GM10248 (cell line): ENCODE measurements at regions of chr5 and their contacts with region 1.

Region 1: DNA sequence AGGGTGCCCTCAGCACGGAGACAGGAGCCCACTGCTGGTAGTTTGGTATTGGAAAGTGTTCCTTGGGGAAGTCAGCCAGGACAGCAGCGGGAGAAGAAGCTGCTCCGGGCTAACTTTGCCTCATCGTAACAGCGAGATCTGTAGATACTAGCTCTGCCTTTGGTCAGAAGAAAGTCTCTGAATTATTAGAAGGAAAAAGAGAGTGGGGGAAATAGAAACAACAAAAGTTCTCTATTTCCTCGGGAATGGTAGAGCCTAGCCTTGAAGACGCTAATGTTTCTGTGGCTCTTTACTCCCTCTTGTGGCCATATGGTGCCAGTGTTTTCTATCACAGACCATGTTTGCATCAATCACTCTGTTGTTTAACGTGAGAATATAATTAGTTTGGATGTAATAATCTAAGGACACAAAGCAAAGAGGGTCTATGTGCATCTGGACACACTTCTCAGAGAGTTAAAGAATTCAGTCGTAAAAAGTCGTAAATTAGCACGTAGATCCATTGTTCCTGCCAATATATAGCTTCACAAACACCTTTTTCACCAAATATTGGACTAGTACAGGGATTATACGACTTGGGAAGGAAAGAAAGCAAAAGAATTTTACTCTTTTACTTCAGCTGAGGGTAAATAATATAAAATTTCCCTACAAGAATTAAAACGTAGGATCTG is 40.2 kb upstream of the HSD17B4 start:
- DNase-seq: peak; percentile 45
- CTCF ChIP-seq: peak; percentile 91

Region 2: DNA sequence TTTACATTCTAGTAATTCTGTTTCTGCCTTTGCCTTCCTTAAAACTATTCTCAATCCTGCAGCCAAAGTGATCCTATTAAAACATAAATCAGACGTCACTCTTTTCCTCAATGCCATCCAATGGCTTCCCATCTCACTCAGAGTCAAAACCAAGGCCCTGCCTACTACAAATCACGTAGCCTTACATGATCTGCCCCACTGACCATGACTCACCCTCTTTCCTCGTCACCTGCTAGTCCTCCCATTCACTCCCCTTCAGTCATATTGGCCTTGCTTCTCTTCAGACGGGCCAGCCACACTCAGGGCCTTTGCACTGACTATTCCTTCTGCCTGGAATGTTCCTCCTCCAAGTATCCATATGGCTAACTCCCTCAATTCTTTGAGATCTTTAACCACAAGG is 380.2 kb before region 1 on chr5:
- CTCF ChIA-PET with region 1: interaction called, 10 read pairs
- POLR2A ChIA-PET with region 1: no interaction called
- DNase-seq: peak; percentile 46
- CTCF ChIP-seq: no peak

Region 3: GRCh38 chr5:119315516-119315949 is 96.5 kb before region 1 on chr5:
- CTCF ChIA-PET with region 1: interaction called, 43 read pairs
- POLR2A ChIA-PET with region 1: no interaction called
- DNase-seq: peak; percentile 73
- CTCF ChIP-seq: peak; percentile 78

Region 4: GRCh38 chr5:119360905-119361593 is 51.0 kb before region 1 on chr5:
- CTCF ChIA-PET with region 1: interaction called, 26 read pairs
- POLR2A ChIA-PET with region 1: no interaction called
- DNase-seq: no peak
- CTCF ChIP-seq: no peak

Region 5: GRCh38 chr5:119389288-119390030 is 22.6 kb before region 1 on chr5:
- CTCF ChIA-PET with region 1: interaction called, 31 read pairs
- POLR2A ChIA-PET with region 1: no interaction called
- DNase-seq: no peak
- CTCF ChIP-seq: no peak

Region 6: GRCh38 chr5:119435436-119436132 is 23.5 kb after region 1 on chr5:
- CTCF ChIA-PET with region 1: interaction called, 34 read pairs
- POLR2A ChIA-PET with region 1: no interaction called
- DNase-seq: peak; percentile 52
- CTCF ChIP-seq: peak; percentile 56